Activated CD4-positive, alpha-beta memory T cell treated with anti-CD3 and anti-CD28 coated beads, Interleukin-2, amount 10 ng/mL, durations not matched to agents 7 days and 5 days (primary cell): ENCODE measurements at regions of chr6 and their contacts with region 1.

Region 1: GRCh38 chr6:116268589-116269293 is 11.0 kb downstream of the TSPYL1 start:
- DNase-seq: no peak
- H3K4me3 Mint-ChIP-seq: no peak overlapping the region
- H3K27ac Mint-ChIP-seq: no peak overlapping the region
- H3K4me1 Mint-ChIP-seq: peaks cover 7% of the 10 kb centered on the region
- H3K27me3 Mint-ChIP-seq: no peaks in the 10 kb centered on the region

Region 2: DNA sequence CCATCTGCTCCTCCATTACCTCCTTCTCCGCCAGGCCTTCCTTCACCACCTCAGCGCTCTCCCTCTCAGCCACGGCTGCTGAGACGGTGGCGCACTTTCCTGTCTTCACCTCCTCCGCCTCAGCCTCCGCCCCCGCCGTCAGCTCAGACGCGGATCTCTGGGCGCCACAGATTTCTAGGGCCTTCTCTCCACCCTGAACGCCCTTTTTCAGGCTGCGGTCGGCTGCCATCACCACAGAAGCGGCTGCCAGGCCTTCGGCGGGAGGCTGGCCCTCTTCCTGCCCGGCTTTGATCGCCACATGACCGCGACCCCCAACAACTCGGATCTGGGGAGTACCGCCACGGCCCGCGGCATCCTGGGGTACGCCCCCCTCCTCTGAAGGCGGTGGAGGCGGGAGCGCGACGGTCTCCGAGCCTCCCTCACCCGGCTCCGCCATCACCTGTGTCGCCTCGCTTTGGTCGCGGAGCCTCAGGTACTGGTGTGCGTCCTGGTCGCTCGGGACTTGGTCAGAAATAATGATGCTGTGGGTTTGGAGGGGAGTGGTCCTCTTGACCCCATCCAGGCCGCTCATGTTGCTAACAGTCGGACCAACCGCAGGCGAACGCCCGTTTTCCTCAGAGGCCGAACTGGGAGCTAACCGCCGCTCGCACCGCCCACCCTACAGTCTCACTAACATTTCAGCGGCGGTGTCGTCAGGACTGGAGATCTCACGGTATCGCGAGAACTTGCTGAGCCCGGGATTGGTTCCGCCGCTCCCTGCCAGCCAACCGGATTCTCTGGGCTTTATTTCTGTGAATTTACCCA is 10.7 kb after region 1 on chr6 and contains the start of gene TSPYL1:
- CTCF ChIA-PET with region 1: interaction called, 16 read pairs
- POLR2A ChIA-PET with region 1: interaction called, 23 read pairs
- DNase-seq: peak; percentile 96
- H3K4me3 Mint-ChIP-seq: peak within 1 kb of the TSS; percentile 99
- H3K27ac Mint-ChIP-seq: peak within 1 kb of the TSS; percentile 99
- H3K4me1 Mint-ChIP-seq: peaks cover 51% of the 10 kb centered on the region
- H3K27me3 Mint-ChIP-seq: no peaks in the 10 kb centered on the region
- total RNA-seq, gene TSPYL1: 47.6 to 48.4 TPM

Region 3: GRCh38 chr6:116450769-116451740 is 182.3 kb after region 1 on chr6:
- CTCF ChIA-PET with region 1: no interaction called
- POLR2A ChIA-PET with region 1: no interaction called
- DNase-seq: no peak
- H3K4me3 Mint-ChIP-seq: no peak overlapping the region
- H3K27ac Mint-ChIP-seq: no peak overlapping the region
- H3K4me1 Mint-ChIP-seq: peaks cover 29% of the 10 kb centered on the region
- H3K27me3 Mint-ChIP-seq: peaks cover 24% of the 10 kb centered on the region

Region 4: GRCh38 chr6:116465246-116465645 is 196.5 kb after region 1 on chr6:
- CTCF ChIA-PET with region 1: no interaction called
- POLR2A ChIA-PET with region 1: no interaction called
- DNase-seq: no peak
- H3K4me3 Mint-ChIP-seq: no peak overlapping the region
- H3K27ac Mint-ChIP-seq: no peak overlapping the region
- H3K4me1 Mint-ChIP-seq: peaks cover 50% of the 10 kb centered on the region
- H3K27me3 Mint-ChIP-seq: peaks cover 36% of the 10 kb centered on the region